Right ventricle myocardium inferior (tissue), 1 donor: ENCODE measurements at regions of chr2 and their contacts with region 1.

Region 1: GRCh38 chr2:219642465-219643080 is 15.1 kb downstream of the SLC4A3 start:
- DNase-seq: peak; percentile 98
- ATAC-seq: peak; percentile 71

Region 2: DNA sequence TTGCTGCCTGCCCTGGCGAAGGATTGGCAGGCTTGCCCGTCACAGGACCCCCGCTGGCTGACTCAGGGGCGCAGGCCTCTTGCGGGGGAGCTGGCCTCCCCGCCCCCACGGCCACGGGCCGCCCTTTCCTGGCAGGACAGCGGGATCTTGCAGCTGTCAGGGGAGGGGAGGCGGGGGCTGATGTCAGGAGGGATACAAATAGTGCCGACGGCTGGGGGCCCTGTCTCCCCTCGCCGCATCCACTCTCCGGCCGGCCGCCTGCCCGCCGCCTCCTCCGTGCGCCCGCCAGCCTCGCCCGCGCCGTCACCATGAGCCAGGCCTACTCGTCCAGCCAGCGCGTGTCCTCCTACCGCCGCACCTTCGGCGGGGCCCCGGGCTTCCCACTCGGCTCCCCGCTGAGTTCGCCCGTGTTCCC is 224.4 kb before region 1 on chr2 and contains the start of gene DES:
- intact Hi-C with region 1: loop called (anchors 5 kb)
- DNase-seq: peak; percentile 81
- ATAC-seq: peak; percentile 63
- total RNA-seq, gene DES: 13,356 TPM

Region 3: DNA sequence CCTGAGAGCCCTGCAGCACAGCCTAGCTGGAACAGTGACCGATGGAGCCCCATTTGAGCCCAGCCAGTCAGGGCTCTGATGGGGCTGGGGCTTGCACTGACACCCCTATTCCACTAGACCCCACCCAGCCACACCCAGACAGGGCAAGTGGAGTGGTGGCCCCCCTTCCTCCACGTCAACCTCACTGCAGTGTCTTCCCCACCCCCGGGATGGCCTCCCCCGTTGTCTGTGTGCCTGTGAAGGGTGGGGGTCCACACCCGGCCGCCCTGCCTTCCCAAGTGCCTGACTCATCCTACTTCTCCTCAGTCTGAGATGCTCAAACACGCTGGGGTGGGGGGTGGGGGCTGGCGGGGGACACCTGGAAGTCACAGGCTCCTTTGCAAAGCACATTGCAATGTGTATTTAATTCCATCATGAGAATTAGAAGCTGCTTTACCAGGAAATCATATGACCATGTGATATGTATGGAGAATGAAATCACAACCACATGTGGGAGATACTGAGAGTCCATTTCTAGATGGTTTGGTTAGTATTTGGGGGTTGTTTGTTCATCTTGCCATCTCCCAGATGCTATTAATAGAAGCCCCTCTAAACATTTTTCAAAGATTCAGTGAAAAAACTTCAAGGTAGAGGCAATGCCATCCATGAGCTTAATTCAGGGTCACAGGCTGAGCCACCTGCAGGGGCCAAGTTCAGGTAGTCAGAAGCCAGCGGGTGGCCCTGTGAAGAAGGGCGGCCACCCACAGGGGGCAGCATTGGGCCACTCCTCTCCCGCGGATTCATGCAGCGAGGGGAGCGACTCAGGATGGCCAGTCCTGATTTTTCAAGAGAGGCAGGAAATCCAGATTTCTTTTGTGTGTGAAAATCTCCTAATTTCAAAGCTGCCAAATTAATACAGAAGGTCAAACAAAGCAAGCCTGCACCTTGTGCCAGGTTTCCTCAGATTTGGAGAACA is 166.6 kb before region 1 on chr2:
- intact Hi-C with region 1: loop called (anchors 10 kb)
- DNase-seq: peak; percentile 80
- ATAC-seq: peak; percentile 56

Region 4: DNA sequence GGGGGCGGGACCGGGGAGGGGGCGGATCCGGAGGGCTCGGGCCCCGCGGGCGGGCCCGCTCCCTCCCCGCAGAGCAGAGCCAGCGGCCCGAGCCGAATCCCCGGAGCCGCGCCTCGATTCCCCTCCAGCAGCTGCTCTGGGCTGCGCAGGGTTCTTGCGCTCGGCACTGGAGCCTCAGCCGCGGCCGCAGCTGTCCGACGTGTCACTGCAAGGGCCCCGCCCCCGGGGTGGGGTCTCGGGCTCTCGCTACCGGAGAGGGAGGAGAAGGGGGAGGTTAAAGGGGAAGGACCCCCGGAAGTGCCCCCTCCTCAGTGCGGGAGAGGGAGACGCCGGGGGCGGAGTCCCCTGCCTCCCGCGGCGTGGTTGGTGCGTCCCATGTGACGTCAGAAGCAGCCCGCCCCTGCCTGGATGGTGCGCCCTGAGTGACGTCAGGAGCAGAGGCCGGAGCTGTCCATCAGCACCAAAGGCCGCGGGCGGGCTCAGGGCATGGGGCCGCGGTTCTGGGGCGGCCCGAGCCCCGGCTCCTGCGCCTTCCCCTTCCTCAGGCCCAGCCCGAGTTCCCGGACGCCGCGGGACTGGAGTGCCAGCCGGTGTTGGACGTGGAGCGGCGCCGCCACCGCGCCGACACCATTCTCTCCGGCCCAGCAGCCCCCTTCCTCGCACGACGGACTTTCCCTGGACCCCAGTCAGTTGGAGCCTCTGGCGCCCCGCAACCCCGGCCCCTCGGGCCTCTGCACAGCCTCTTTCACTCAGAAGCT is 98.8 kb before region 1 on chr2 and contains the starts of genes CHPF and TMEM198:
- intact Hi-C with region 1: loop called (anchors 1 kb)
- DNase-seq: peak; percentile 98
- ATAC-seq: peak; percentile 95
- total RNA-seq, gene CHPF: 92.2 TPM
- total RNA-seq, gene TMEM198: 2.7 TPM

Region 5: GRCh38 chr2:219571311-219572236 is 71.0 kb before region 1 on chr2 and contains the start of gene OBSL1:
- intact Hi-C with region 1: loop called (anchors 2 kb)
- DNase-seq: peak; percentile 85
- ATAC-seq: peak; percentile 88
- total RNA-seq, gene OBSL1: 158 TPM

Region 6: DNA sequence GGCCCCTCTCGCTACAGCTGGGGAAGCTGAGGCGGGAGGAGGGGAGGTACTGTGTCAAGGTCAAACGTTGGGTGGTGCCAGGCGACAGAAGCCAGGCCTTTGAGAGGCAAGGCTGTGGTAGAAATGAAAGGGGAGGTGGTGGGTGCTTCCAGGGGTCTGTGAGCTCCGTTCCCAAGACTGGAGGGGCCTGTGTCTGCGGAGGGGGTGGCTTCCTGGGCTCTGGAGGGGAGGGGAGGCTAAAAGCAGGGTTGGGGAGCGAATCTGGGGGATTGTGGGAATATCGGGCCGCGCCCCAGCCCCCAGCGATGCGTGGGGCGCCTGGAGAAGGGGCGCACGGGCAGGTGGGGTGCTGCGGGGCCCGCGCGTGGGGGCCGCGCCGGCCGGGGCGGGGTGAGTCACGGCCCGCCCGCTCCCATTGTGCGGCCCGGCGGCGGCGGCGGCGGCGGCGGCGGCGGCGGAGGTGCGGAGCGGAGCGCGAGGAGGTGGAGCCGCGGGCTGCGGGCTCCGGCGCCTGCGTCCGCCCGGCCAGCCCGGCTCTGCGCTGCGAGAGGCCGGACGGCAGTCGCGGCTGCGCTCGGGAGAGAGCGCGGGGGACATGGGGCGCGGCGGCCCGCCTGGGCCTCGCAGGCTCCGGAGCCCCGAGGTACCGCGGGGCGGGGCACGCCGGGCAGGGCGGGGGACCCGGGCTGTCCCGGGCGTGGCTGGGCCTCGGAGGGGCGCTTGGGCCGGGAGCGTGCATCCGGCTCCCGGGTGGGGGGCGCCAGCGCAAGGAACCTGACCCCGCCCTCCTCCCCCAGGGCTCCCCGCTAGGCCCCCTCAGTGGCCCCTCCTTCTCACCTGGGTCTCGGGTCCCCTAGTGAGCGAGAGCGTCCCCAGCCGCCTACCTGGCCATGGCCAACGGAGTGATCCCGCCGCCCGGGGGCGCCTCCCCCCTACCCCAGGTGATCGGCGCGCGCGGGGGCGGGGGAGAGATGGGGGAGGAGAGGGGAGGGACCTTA is 15.2 kb before region 1 on chr2 and contains the start of gene SLC4A3:
- intact Hi-C with region 1: loop called (anchors 1 kb)
- DNase-seq: no peak
- ATAC-seq: peak; percentile 24
- total RNA-seq, gene SLC4A3: 445 TPM

Region 7: DNA sequence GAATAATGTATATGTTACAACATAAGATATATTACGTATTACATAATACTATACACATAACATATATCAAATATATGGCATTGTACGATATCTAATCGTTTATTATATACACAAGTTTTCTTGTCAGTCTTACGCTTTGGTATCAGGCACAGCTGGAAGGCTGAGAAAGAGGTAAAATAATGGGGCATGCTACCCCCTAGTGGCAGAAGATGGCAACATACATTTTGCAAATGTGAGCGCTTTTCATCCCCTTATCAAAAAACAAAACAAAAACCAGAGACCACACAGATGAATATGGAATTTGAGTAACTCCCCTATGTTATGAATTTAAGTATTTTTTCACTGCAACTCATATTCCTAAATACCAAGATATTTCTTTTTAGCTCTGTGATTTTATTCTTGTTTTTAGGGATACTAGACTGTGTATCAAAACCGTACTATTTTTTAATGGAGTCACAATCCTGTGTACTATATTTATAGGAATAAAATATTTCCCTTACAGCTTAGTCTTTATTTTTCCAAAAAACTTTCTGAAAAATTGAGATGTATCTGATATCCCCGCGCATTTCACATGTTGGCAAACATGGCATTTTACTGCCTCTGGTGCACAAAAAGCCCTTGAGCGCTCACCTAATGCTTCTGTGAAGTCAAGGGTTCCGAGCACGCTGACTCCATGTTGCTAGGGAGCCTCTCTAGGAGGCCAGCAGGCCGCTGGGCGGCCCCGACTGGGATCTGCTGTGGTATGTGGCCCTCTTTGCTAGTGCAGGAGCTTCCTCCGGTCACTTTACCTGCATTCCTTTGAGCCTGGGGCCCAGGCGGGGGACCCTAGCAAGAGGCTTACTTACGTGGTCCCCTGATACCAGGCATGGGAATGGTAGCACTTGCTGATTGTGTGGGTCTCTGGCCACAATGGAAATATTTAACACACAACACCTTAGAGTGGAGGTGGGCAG is 47.4 kb after region 1 on chr2:
- intact Hi-C with region 1: loop called (anchors 1 kb)
- DNase-seq: no peak
- ATAC-seq: peak; percentile 61

Region 8: DNA sequence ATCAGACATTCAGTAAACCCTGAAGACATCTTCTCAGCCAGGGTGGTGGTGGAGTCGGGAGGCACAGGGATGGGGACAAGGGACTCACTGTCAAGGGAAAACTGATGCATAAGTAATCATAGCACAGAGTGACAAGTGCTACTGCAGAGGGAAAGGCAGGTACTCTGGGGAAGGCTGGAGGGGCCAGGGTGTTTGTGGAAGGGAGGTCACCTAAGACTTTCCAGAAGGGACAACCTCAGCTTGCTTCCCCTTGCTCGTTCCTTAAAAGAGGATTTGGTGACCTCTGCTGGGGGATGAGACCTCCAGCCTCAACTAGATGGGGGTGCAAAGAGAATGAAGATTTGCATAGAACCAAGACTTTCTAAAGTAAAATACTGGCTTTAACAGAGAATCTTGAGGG is 84.3 kb after region 1 on chr2:
- intact Hi-C with region 1: no loop called
- DNase-seq: no peak
- ATAC-seq: peak; percentile 48